SK-N-SH (cell line): ENCODE measurements at regions of chr19 and their contacts with region 1.

Region 1: GRCh38 chr19:47428177-47428894 is 9.0 kb upstream of the MEIS3 start:
- DNase-seq: peak; percentile 96
- H3K4me3 ChIP-seq: peak overlapping the region; percentile 37 to 62
- H3K27ac ChIP-seq: peak overlapping the region; percentile 74 to 78
- H3K4me1 ChIP-seq: peaks cover 4 to 12% of the 10 kb centered on the region in 2 experiments; a peak in 2 of 4 replicates
- H3K27me3 ChIP-seq: no peaks in the 10 kb centered on the region
- CTCF ChIP-seq: no peak
- EP300 ChIP-seq: 0 out of 4 replicates have a peak, but pooled peaks of 1 of the 2 experiments have one; percentile 13
- RAD21 ChIP-seq: no peak

Region 2: GRCh38 chr19:47284324-47284899 is 143.9 kb before region 1 on chr19:
- CTCF ChIA-PET with region 1: interaction called, 11 read pairs
- POLR2A ChIA-PET with region 1: no interaction called
- DNase-seq: peak; percentile 56
- H3K4me3 ChIP-seq: no peak overlapping the region
- H3K27ac ChIP-seq: no peak overlapping the region
- H3K4me1 ChIP-seq: peaks cover 0 to 8% of the 10 kb centered on the region in 2 experiments; a peak in 2 of 4 replicates
- H3K27me3 ChIP-seq: no peaks in the 10 kb centered on the region
- CTCF ChIP-seq: peak; percentile 88
- EP300 ChIP-seq: no peak
- RAD21 ChIP-seq: peak; percentile 66

Region 3: GRCh38 chr19:47296036-47296435 is 132.3 kb before region 1 on chr19:
- CTCF ChIA-PET with region 1: interaction called, 30 read pairs
- POLR2A ChIA-PET with region 1: no interaction called
- DNase-seq: peak; percentile 78
- H3K4me3 ChIP-seq: peak overlapping the region in 1 of 2 experiments; percentile 23; a peak in 1 of 4 replicates
- H3K27ac ChIP-seq: no peak overlapping the region
- H3K4me1 ChIP-seq: no peaks in the 10 kb centered on the region
- H3K27me3 ChIP-seq: no peaks in the 10 kb centered on the region
- CTCF ChIP-seq: peak; percentile 78
- EP300 ChIP-seq: no peak
- RAD21 ChIP-seq: peak; percentile 91

Region 4: GRCh38 chr19:47526798-47527197 is 98.5 kb after region 1 on chr19:
- CTCF ChIA-PET with region 1: no interaction called
- POLR2A ChIA-PET with region 1: no interaction called
- DNase-seq: no peak
- H3K4me3 ChIP-seq: no peak overlapping the region
- H3K27ac ChIP-seq: no peak overlapping the region
- H3K4me1 ChIP-seq: peaks cover 0 to 3% of the 10 kb centered on the region in 2 experiments; a peak in 1 of 4 replicates
- H3K27me3 ChIP-seq: no peaks in the 10 kb centered on the region
- CTCF ChIP-seq: no peak
- EP300 ChIP-seq: no peak
- RAD21 ChIP-seq: no peak